PC-3 (cell line): ENCODE measurements at regions of chr6 and their contacts with region 1.

Region 1: GRCh38 chr6:30821862-30822782 is 62.2 kb upstream of the DDR1 start:
- DNase-seq: peak; percentile 70
- ATAC-seq: 0 out of 2 replicates have a peak, but pooled peaks have one; percentile 8
- H3K4me3 ChIP-seq: peak overlapping the region; percentile 13; the same call in 1 of the 2 replicates
- H3K27ac ChIP-seq: peak overlapping the region; percentile 74
- H3K4me1 ChIP-seq: peaks cover 63% of the 10 kb centered on the region
- H3K27me3 ChIP-seq: no peaks in the 10 kb centered on the region
- CTCF ChIP-seq: peak; percentile 77

Region 2: DNA sequence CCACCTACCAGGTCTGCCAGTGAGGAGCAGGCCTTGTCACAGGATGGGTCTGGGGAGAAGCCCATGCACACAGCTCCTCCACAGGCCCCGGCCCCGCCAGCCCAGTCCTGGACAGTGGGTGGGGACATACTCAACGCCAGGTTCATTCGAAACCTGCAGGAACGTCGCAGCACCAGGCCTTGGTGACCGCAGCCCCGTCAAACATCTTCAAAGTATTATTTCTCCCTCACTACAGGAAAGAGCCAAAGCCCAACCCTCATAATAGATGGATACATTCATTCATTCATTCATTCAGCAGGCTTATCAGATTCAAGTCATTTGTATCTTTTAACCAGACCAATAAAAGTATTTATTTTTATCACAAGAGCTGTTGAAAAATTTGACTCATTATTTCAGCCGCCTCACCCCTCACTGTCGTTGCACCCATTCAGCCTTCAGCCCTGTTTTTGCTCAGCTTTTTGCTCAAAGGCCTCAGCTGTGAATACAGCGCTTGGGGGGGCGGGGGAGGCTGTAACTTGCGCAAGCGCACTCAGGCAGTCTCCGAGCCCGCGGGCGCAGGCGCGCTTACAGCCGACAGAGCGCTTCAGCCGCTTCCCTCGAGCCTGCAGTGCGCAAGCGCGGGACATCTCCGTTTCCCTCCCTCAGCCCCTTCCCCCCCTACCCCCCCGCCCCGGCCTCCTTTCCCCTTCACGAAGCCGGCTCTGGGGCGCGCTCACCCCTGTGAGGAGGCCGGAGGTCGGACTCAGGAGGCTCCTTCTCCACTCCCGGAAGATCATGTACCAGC is 175.5 kb before region 1 on chr6 and contains the start of gene C6orf136:
- CTCF ChIA-PET with region 1: no interaction called
- POLR2A ChIA-PET with region 1: no interaction called
- intact Hi-C with region 1: no loop called
- DNase-seq: peak; percentile 93
- ATAC-seq: peak; percentile 74
- H3K4me3 ChIP-seq: peak within 1 kb of the TSS; percentile 82
- H3K27ac ChIP-seq: peak within 1 kb of the TSS; percentile 55
- H3K4me1 ChIP-seq: peaks cover 11% of the 10 kb centered on the region
- H3K27me3 ChIP-seq: no peaks in the 10 kb centered on the region
- CTCF ChIP-seq: no peak
- total RNA-seq, gene C6orf136: 10.6 and 18.7 TPM in 2 replicates

Region 3: GRCh38 chr6:30686908-30687658 is 135.0 kb before region 1 on chr6:
- CTCF ChIA-PET with region 1: interaction called, 7 read pairs
- POLR2A ChIA-PET with region 1: no interaction called
- intact Hi-C with region 1: loop called (anchors 5 kb)
- DNase-seq: peak; percentile 96
- ATAC-seq: peak; percentile 58
- H3K4me3 ChIP-seq: peak overlapping the region; percentile 97
- H3K27ac ChIP-seq: peak overlapping the region; percentile 96
- H3K4me1 ChIP-seq: peaks cover 66% of the 10 kb centered on the region
- H3K27me3 ChIP-seq: no peaks in the 10 kb centered on the region
- CTCF ChIP-seq: no peak

Region 4: DNA sequence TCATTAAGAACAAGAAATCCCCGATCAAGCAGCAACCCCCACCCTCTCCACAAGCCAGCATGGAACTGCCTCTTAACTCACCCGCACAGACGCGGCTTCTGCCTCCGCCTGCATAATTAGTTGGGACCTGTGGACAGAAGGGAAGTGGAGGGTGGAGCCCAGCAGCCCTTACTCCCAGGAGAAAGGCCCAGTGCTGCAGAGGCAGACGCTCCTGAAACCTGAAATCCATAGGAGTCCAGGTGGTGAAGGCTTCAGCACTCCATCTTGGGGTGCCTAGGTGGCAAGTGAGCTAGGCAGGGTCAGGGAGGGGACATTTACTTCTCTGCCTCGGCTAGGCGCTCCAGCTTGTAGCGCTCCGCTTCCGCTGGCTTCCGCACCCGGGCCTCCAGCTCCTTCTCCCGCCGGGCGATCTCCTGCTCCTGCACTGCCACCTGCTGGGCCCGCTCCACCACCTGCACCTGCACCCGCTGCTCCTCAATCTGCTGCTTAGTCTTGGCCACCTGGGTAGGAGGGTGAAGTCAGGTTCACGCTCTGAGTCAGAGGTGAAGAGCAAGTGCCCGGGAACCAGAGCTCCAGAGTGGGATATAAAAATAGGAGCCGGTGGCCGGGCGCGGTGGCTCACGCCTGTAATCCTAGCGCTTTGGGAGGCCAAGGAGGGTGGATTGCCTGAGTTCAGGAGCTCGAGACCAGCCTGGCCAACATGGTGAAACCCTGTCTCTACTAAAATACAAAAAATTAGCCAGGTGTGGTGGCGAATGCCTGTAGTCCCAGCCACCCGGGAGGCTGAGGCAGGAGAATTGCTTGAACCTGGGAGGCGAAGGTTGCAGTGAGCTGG is 91.3 kb before region 1 on chr6:
- CTCF ChIA-PET with region 1: interaction called, 4 read pairs
- POLR2A ChIA-PET with region 1: interaction called, 19 read pairs
- intact Hi-C with region 1: no loop called
- DNase-seq: peak; percentile 84
- ATAC-seq: peak; percentile 76
- H3K4me3 ChIP-seq: peak overlapping the region; percentile 25; the same call in 1 of the 2 replicates
- H3K27ac ChIP-seq: peak overlapping the region; percentile 40
- H3K4me1 ChIP-seq: peaks cover 10% of the 10 kb centered on the region; the same call in 1 of the 2 replicates
- H3K27me3 ChIP-seq: no peaks in the 10 kb centered on the region
- CTCF ChIP-seq: peak; percentile 84

Region 5: GRCh38 chr6:30781743-30782424 is 40.2 kb before region 1 on chr6:
- CTCF ChIA-PET with region 1: interaction called, 3 read pairs
- POLR2A ChIA-PET with region 1: interaction called, 5 read pairs
- intact Hi-C with region 1: loop called (anchors 1 kb)
- DNase-seq: peak; percentile 99
- ATAC-seq: peak; percentile 64
- H3K4me3 ChIP-seq: peak overlapping the region; percentile 43
- H3K27ac ChIP-seq: peak overlapping the region; percentile 96
- H3K4me1 ChIP-seq: peaks cover 52% of the 10 kb centered on the region
- H3K27me3 ChIP-seq: no peaks in the 10 kb centered on the region
- CTCF ChIP-seq: no peak